Posterior vena cava (tissue), 2 donors: ENCODE measurements at regions of chr14 and their contacts with region 1.

Region 1: DNA sequence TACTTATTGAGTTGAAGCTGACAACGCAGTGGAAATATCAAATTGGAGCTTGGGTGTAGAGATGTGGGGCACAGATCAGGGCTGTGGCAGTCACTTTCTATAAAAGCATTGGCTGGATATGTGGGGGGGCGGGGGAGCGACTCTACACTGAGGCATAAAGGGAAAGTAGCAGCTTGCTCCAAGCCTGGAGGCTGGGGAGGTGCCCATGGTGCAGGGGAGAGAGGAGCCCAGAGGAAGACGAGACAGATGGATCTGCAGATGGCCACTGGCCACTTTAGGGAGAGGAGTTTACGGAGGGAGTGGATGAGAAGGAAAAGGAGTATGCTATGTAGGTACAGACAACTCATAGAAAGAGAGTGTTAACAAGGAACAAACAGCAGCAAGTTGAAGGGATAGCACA is 13.5 kb upstream of the NGB start:
- DNase-seq: peak; percentile 19

Region 2: DNA sequence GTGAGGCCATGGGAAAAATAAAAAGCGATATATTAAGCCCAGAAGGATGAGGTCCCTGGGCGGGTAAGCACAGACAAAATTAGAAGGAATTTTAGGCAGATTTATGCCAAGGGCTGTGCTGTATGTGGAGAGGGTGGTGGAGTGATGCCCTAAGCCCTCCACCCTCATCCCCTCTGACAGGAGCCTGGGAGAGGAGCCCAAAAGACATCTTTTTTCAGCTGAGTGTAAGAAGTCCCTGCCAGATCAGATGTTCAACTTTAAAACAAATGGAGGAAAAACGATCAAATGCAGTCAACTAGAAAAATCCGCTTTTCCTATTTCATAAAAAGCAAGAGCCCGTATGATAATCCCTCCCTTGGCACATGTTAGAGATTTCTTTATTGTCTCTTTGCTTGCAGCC is 838.0 kb after region 1 on chr14:
- intact Hi-C with region 1: loop called in 1 of 2 experiments (anchors 5 kb)
- DNase-seq: no peak